ENCODE measurements at regions of chr6 and their contacts with region 1.

Region 1: DNA sequence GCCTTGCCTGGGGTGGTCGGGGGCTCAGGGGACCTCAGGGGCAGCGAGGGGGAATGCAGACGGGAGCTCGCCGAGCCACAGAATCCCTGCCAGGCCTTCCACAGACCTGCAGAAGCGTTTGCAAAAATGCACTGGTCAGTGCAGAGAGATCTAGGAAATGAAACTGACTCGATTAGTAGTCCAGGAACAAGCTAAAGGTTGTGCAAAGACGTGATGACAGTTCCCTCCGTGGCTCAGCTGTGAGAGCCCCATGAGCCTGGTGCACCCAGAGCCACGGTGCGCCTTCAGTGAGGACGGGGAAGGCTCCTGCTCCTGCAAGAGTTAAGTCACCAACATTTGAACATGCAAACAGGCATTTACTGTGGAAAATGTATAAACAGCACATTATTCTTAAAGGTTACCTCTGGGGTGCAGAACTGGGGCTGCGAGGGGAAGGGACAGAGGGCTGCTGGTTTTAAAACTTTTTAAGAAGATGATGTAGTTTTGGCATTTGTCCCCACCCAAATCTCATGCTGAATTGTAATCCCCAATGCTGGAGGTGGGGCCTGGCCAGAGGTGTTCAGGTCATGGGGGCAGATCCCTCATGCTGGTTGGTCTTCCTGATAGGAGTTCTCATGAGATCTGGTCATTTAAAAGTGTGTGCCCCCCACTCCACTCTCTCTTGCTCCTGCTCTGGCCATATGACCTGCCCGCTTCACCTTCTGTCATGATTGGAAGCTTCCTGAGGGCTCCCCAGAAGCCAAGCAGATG is 147.3 kb downstream of the DLL1 start:
- DNase-seq: peak in 3 of 5 donors; percentile 2 to 38 (median 9)
- ATAC-seq: no peak
- H3K4me3 ChIP-seq: no peak overlapping the region
- H3K27ac ChIP-seq: no peak overlapping the region
- H3K4me1 ChIP-seq: peaks cover 0 to 22% (median 14%) of the 10 kb centered on the region in 12 donors
- H3K27me3 ChIP-seq: no peaks in the 10 kb centered on the region
- CTCF ChIP-seq: no peak
- POLR2A ChIP-seq: no peak

Region 2: GRCh38 chr6:170265655-170266054 is 122.1 kb after region 1 on chr6:
- intact Hi-C with region 1: loop called in 1 of 10 experiments (anchors 5 kb)
- DNase-seq: peak in 4 of 5 donors; percentile 59 to 83 (median 80)
- ATAC-seq: peak; percentile 83 to 90 (median 88)
- H3K4me3 ChIP-seq: peak overlapping the region in 3 of 12 donors; percentile 7 to 14 (median 11)
- H3K27ac ChIP-seq: peak overlapping the region; percentile 5 to 74 (median 62)
- H3K4me1 ChIP-seq: peaks cover 0 to 19% (median 11%) of the 10 kb centered on the region in 12 donors
- H3K27me3 ChIP-seq: peaks cover 0 to 6% (median 0%) of the 10 kb centered on the region in 9 donors
- CTCF ChIP-seq: peak in 2 of 12 donors; percentile 10 to 27
- POLR2A ChIP-seq: no peak